ENCODE measurements at regions of chr10 and their contacts with region 1.

Region 1: GRCh38 chr10:73159038-73159648 is 8.7 kb downstream of the ECD start:
- DNase-seq: peak in 34 of 35 experiments; percentile 6 to 77 (median 44)
- ATAC-seq: peak in 3 of 4 experiments; percentile 16 to 70 (median 58)
- H3K4me3 ChIP-seq: no peak overlapping the region
- H3K4me3 Mint-ChIP-seq: no peak overlapping the region
- H3K27ac ChIP-seq: no peak overlapping the region
- H3K27ac Mint-ChIP-seq: no peak overlapping the region
- H3K4me1 ChIP-seq: peaks cover 6 to 7% of the 10 kb centered on the region in 2 experiments
- H3K4me1 Mint-ChIP-seq: peaks cover 37 to 38% (median 37%) of the 10 kb centered on the region in 3 donors
- H3K27me3 ChIP-seq: no peaks in the 10 kb centered on the region
- H3K27me3 Mint-ChIP-seq: no peaks in the 10 kb centered on the region

Region 2: GRCh38 chr10:73186266-73186665 is 27.1 kb after region 1 on chr10:
- CTCF ChIA-PET with region 1: interaction called in 1 of 2 experiments, 10 read pairs
- POLR2A ChIA-PET with region 1: no interaction called
- DNase-seq: no peak
- ATAC-seq: no peak
- H3K4me3 ChIP-seq: no peak overlapping the region
- H3K4me3 Mint-ChIP-seq: no peak overlapping the region
- H3K27ac ChIP-seq: no peak overlapping the region
- H3K27ac Mint-ChIP-seq: no peak overlapping the region
- H3K4me1 ChIP-seq: no peaks in the 10 kb centered on the region
- H3K4me1 Mint-ChIP-seq: no peaks in the 10 kb centered on the region
- H3K27me3 ChIP-seq: no peaks in the 10 kb centered on the region
- H3K27me3 Mint-ChIP-seq: no peaks in the 10 kb centered on the region

Measured in T-cell (primary cell).